Left cardiac atrium (tissue), 4 donors: ENCODE measurements at regions of chr2 and their contacts with region 1.

Region 1: DNA sequence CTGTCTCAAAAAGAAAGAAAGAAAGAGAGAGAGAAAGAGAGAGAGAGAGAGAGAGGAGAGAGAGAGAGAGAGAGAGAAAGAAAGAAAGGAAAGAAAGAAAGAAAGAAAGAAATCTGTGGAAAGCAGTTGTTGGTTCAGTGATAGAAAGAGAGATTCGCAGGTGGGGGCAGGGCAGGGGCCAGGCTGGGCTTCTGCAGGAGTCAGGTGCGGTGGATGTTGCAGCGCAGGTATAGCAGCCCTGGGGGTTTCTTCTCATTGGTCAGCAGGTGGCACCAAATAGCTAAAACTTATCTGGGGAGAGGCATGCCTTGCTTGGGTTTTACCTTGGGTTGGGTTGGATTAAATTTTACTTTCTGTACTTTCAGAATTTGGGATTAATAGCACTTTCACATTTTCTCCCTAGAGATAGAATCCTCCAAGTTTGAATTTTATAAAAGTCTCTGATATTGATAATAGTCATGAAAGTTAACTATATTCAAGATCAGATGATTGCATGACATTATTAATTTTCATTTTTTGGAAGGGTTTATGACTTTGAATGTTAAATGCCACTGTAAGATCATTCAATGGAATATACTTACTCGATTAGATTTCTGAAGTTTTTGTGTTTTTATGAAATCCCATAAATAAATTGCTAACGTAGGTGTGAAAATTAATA is 66.6 kb downstream of the SPTBN1 start:
- DNase-seq: no peak
- ATAC-seq: peak; percentile 57 to 62

Region 2: DNA sequence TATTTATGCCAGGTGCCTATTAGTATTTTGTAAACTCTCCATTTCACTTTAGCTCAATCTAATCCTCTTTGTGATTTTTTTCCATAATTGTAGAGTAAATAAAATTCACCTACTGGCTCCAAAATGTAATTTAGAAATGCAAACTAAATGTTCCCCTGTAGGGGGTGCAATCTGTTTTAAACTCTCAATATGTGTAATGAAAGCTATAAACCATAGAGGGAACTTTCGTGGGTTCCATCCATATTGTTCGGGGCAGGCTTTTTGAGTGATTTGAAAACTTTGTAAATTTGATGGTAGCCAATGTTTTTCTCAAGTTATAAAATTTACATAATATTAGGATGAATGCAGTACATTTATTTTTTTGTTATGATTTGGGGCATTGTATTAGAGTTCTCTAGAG is 316.2 kb before region 1 on chr2:
- intact Hi-C with region 1: loop called in 1 of 2 experiments (anchors 10 kb)
- DNase-seq: no peak
- ATAC-seq: peak in 1 of 2 donors; percentile 40

Region 3: GRCh38 chr2:54461261-54461660 is 61.5 kb before region 1 on chr2:
- intact Hi-C with region 1: loop called in 1 of 2 experiments (anchors 5 kb)
- DNase-seq: no peak
- ATAC-seq: no peak

Region 4: GRCh38 chr2:54613794-54614257 is 91.1 kb after region 1 on chr2:
- intact Hi-C with region 1: loop called in 1 of 2 experiments (anchors 10 kb)
- DNase-seq: peak; percentile 62
- ATAC-seq: peak in 1 of 2 donors; percentile 64

Region 5: DNA sequence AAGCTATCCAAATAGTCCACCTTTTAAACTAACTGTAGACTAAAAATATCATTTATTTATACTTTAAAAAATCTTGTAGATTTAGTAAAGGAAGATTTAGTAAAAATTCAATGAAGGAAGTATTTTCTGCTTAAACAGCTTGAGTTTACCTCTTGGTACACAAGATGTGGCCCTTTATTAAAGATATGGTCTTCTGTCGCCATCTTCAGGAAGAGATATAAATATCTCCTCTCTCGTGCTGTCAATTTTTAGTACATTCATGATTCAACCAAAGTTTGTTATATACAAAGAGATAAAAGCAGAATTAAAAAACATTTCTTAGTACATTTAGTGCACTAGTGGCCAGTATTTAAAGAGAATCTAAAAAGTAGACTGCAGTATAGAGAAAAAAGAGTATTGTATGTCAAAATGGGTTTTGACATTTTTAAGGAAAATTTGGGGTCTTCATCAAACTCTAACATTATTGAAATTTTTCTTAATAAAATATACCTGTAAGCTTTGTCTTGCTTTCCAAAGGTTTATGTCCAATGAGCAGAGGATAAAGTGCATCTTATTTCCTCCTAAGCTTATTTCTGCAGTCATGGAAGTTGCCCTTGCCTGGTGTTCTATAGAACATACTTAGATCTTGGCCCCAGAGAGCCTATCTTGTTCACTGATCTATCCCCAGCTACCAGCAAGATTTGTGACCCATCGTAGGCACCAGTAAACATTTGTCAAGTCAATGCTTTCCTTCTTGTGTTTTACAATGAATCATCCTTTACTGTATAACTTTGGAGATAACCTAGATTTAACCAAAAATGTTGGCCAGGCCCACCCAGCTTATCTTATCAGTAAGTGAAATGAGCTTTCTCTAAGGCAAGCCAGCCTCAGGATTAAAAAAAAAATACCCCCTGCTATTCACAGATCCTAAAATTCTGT is 182.2 kb after region 1 on chr2:
- intact Hi-C with region 1: loop called in 1 of 2 experiments (anchors 10 kb)
- DNase-seq: no peak
- ATAC-seq: peak; percentile 48 to 66